Activated T-helper 2 cell treated with anti-CD3 and anti-CD28 coated beads, Interferon-gamma antibody, Interleukin-2, Interleukin-4, amounts not matched to agents 10 μg/mL and 5 μg/mL and 100 μg/mL, durations not matched to agents 14 hours and 24 hours and 36 hours (primary cell): ENCODE measurements at regions of chr2 and their contacts with region 1.

Region 1: GRCh38 chr2:157394928-157395327 is 49.0 kb downstream of the CYTIP start:
- DNase-seq: no peak
- H3K4me3 Mint-ChIP-seq: no peak overlapping the region
- H3K27ac Mint-ChIP-seq: no peak overlapping the region
- H3K4me1 Mint-ChIP-seq: no peaks in the 10 kb centered on the region
- H3K27me3 Mint-ChIP-seq: no peaks in the 10 kb centered on the region

Region 2: GRCh38 chr2:157024129-157024528 is 370.8 kb before region 1 on chr2:
- intact Hi-C with region 1: no loop called
- DNase-seq: no peak
- H3K4me3 Mint-ChIP-seq: no peak overlapping the region
- H3K27ac Mint-ChIP-seq: no peak overlapping the region
- H3K4me1 Mint-ChIP-seq: no peaks in the 10 kb centered on the region
- H3K27me3 Mint-ChIP-seq: no peaks in the 10 kb centered on the region

Region 3: GRCh38 chr2:157355618-157356017 is 39.3 kb before region 1 on chr2:
- intact Hi-C with region 1: loop called (anchors 5 kb)
- DNase-seq: no peak
- H3K4me3 Mint-ChIP-seq: no peak overlapping the region
- H3K27ac Mint-ChIP-seq: no peak overlapping the region
- H3K4me1 Mint-ChIP-seq: no peaks in the 10 kb centered on the region
- H3K27me3 Mint-ChIP-seq: no peaks in the 10 kb centered on the region

Region 4: DNA sequence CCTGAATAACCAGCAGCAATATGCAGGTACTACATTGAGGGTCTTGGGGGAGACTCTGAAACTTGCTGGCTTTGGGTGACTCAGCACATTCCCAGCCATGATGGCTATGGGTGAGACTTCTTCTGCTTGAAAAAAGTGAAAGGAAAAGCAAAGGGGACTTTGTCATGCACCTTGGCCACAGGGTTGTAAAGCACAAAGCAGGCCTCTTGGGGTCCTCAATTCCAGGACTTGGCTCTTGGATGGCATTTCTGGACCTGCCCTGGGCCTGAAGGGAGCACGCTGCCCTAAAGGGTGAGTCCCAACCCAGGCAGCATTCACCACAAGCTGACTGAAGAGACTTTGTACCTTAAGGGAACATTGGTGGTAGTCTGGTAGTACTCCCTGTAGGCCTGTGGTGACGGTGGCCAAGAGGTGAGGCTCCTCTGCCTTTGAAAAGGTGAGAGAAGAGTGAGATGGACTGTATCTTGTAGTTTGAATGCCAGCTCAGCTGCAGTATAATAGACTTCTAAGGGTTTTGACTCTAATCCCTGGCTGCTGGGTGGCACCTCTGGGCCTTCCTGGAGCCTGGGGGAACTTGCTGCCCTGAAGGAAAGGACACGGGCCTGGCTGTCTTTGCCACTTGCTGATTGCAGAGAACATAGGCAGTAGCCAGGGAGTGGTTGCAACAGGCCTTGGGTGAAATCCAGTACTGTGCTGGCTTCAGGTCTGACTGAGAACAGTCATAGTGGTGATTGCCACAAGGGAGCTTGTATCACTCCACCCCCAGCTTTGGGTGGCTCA is 85.4 kb after region 1 on chr2:
- intact Hi-C with region 1: no loop called
- DNase-seq: no peak
- H3K4me3 Mint-ChIP-seq: peak overlapping the region; percentile 68
- H3K27ac Mint-ChIP-seq: peak overlapping the region; percentile 91
- H3K4me1 Mint-ChIP-seq: peaks cover 70% of the 10 kb centered on the region
- H3K27me3 Mint-ChIP-seq: no peaks in the 10 kb centered on the region